ENCODE measurements at regions of chr10 and their contacts with region 1.

Region 1: DNA sequence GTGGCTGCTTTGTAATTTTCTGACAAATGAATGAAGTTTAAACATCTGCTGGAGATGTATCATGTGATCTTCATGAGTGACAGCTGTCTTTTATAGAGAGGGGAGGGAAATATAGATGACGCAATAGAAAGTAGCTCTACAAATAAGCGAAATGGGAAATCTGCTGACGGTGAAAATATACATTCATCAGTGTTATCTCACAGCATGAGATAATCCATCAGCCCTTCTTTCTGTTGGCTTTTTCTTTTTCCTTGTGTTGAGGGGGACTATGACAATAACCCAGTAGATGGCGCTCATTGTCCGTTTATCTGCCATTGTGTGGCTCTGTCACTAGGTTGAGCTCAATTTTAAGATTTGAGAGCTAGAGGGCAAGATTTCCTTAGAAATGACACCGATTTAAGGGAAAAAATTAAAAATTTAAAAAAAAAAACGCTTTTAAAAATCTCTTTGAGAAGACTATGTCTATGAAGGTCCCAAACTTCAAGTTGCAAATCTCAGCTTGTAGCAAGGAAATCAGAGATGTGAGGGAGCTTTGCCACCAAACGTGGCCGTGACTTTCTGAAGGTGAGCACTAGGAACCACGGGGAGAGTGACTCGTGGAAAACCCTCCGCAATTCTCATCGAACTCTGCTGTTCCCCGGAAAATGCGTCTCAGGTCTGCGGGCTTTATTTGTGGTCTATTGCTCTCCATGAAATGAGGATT is 114.6 kb upstream of the SFMBT2 start:
- DNase-seq: no peak
- ATAC-seq: peak; percentile 77 to 84
- H3K4me3 ChIP-seq: no peak overlapping the region
- H3K27ac ChIP-seq: no peak overlapping the region
- H3K4me1 ChIP-seq: no peaks in the 10 kb centered on the region
- H3K27me3 ChIP-seq: peaks cover 21% of the 10 kb centered on the region
- CTCF ChIP-seq: peak; percentile 80

Region 2: DNA sequence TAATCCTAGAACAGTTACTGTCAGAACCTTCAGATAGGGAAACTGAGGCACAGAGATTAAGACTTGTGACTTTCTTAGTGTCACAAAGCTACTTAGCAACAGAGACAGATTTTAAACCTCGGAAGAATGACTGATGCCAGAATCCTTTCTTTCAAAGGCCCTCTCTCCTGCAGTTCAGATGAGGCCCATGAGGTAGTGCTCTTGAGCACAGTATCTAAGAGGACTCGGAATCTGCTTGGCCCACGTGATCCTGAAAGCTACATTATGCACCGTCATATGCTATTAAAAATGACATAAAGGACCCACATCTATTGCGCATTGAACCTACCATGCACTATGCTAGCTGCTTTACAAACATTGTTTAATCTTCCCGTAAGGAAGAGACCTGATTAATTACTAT is 470.6 kb before region 1 on chr10:
- intact Hi-C with region 1: no loop called
- DNase-seq: no peak
- ATAC-seq: no peak
- H3K4me3 ChIP-seq: no peak overlapping the region
- H3K27ac ChIP-seq: no peak overlapping the region
- H3K4me1 ChIP-seq: no peaks in the 10 kb centered on the region
- H3K27me3 ChIP-seq: no peaks in the 10 kb centered on the region
- CTCF ChIP-seq: no peak

Region 3: DNA sequence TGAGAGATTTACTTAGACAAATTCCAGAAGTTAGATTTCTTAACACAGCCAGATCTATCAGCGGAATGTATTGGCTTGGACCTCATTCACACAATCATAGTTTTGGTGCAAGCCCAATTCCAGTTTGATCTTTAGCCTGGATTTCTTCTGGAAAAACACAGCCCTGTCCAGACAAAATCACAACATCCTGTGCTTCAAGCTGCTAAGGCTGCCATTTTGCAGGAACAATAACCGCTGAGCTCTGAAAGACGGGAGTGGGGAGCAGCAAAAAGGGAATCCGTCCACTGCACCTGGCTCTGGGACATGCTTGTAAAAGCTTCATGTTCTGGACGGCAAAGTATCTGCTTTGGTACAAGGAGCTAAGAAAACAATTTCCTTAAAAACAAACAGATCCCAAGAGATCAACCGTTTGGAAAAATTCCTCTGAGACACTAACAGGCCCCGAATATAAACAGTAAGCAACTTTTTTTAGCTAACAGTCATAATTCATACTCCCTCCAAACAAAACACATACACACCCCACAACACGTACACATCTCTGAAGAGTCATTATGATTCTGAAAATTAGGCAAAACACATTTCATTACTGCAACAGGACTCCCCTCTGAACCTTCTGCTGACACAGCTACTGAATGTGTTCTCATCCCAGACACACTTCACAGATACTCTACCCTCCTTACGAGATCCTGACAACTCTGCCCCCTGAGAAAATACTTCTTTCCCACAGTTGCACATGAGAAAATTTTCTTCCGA is 108.9 kb after region 1 on chr10:
- intact Hi-C with region 1: no loop called
- DNase-seq: no peak
- ATAC-seq: no peak
- H3K4me3 ChIP-seq: no peak overlapping the region
- H3K27ac ChIP-seq: peak overlapping the region; percentile 13
- H3K4me1 ChIP-seq: no peaks in the 10 kb centered on the region
- H3K27me3 ChIP-seq: no peaks in the 10 kb centered on the region
- CTCF ChIP-seq: no peak

Region 4: GRCh38 chr10:7687228-7687907 is 161.9 kb after region 1 on chr10:
- intact Hi-C with region 1: loop called (anchors 5 kb)
- DNase-seq: peak; percentile 81
- ATAC-seq: peak; percentile 94
- H3K4me3 ChIP-seq: no peak overlapping the region
- H3K27ac ChIP-seq: no peak overlapping the region
- H3K4me1 ChIP-seq: no peaks in the 10 kb centered on the region
- H3K27me3 ChIP-seq: no peaks in the 10 kb centered on the region
- CTCF ChIP-seq: peak; percentile 91